Activated CD4-positive, alpha-beta memory T cell treated with anti-CD3 and anti-CD28 coated beads, Interleukin-2, amount 10 ng/mL, durations not matched to agents 7 days and 5 days (primary cell): ENCODE measurements at regions of chr9 and their contacts with region 1.

Region 1: DNA sequence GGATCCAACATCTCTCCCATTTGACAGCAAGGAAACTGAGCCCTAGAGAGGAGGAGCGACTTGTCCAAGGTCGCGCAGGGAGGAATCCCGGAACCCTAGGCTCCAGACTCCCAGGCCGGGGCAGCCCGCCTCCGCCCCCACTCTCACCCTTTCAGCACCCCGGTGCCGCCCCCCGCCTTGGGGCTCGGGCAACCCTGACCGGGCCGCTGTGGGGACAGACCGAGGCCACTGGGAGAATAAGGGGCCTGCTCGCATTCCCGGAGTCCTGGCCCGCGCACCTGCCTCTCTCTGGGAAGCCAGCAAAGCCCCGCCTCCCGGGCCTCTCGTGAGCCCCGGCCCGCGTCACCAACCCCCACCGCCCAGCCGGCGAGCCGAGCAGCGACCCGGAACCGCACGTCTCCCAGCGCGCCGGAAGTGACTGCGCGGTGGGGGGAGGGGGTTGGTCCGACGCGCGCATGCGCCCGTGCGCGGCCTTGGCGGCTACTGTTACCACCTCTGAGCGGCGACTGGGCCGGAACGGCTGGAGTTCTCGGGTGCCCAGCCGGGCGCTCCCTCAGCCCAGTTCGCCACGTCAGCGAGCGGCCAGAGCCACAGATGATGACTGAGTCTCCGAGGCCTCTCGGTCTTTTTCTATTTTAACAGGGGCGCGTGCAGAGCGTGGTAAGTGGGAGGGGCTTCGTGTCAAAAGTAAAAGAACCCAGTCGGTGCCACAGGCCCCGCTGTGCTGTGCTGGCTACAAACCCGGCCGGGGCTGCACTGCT is at the start of gene GOLGA1:
- DNase-seq: peak; percentile 94
- H3K4me3 Mint-ChIP-seq: peak within 1 kb of the TSS; percentile 97
- H3K27ac Mint-ChIP-seq: peak within 1 kb of the TSS; percentile 97
- H3K4me1 Mint-ChIP-seq: peaks cover 31% of the 10 kb centered on the region
- H3K27me3 Mint-ChIP-seq: no peaks in the 10 kb centered on the region
- total RNA-seq, gene GOLGA1: 18.0 to 19.7 TPM

Region 2: DNA sequence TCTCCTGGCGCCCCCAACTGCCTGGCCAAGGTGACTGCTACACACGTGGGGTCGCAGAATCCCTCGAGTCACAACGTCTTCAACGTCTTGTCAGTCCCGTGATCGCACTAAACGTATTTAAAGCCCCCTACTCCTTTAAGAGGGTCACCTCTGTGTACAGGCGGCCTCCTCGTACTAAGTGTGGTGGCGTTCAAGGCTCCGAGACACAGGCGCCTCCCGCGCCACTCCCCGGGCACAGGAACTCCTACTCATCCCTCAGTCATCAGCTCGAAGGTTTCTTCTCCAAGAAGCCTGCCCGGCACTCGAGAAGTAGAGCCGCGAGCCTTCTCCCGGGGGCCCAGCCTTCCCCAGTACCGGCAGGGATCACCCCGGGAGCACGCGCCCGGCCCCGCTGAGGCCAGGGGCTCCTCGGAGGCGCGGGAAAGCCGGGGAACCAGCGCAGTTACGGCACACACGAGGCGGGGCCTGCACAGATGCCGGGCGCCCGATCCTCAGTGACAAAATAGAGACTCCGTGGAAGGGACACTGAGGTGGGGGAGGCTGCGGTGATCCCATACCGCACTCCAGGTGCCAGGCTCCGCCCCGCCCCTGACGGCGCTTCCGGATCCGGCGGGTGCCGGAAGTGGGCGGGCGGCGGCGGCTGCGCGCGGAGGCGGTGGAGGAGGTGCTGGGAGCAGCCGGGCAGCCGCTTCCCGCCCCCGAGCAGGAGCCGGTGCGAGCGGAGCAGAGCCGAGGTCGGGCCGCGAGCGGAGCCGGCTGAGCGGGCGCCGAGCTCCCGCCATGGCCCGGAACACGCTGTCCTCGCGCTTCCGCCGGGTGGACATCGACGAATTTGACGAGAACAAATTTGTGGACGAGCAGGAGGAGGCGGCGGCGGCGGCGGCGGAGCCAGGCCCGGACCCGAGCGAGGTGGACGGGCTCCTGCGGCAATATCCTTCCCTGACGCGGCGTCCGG is 72.1 kb before region 1 on chr9:
- CTCF ChIA-PET with region 1: interaction called, 4 read pairs
- POLR2A ChIA-PET with region 1: interaction called, 29 read pairs
- DNase-seq: peak; percentile 90
- H3K4me3 Mint-ChIP-seq: peak overlapping the region; percentile 88
- H3K27ac Mint-ChIP-seq: peak overlapping the region; percentile 100
- H3K4me1 Mint-ChIP-seq: peaks cover 54% of the 10 kb centered on the region
- H3K27me3 Mint-ChIP-seq: no peaks in the 10 kb centered on the region

Region 3: GRCh38 chr9:124960409-124960752 is 19.5 kb after region 1 on chr9:
- CTCF ChIA-PET with region 1: no interaction called
- POLR2A ChIA-PET with region 1: interaction called, 20 read pairs
- DNase-seq: no peak
- H3K4me3 Mint-ChIP-seq: no peak overlapping the region
- H3K27ac Mint-ChIP-seq: no peak overlapping the region
- H3K4me1 Mint-ChIP-seq: peaks cover 16% of the 10 kb centered on the region
- H3K27me3 Mint-ChIP-seq: no peaks in the 10 kb centered on the region

Region 4: GRCh38 chr9:125143375-125144090 is 202.7 kb after region 1 on chr9 and contains the start of gene SCAI:
- CTCF ChIA-PET with region 1: interaction called, 11 read pairs
- POLR2A ChIA-PET with region 1: interaction called, 17 read pairs
- DNase-seq: peak; percentile 99
- H3K4me3 Mint-ChIP-seq: peak within 1 kb of the TSS; percentile 89
- H3K27ac Mint-ChIP-seq: peak within 1 kb of the TSS; percentile 38
- H3K4me1 Mint-ChIP-seq: peaks cover 35% of the 10 kb centered on the region
- H3K27me3 Mint-ChIP-seq: no peaks in the 10 kb centered on the region
- total RNA-seq, gene SCAI: 7.9 to 8.5 TPM